Activated CD4-positive, alpha-beta T cell treated with anti-CD3 and anti-CD28 coated beads for 36 hours (primary cell): ENCODE measurements at regions of chr7 and their contacts with region 1.

Region 1: GRCh38 chr7:76011442-76011861 is 17.1 kb upstream of the TMEM120A start:
- DNase-seq: no peak
- ATAC-seq: no peak
- H3K4me3 Mint-ChIP-seq: no peak overlapping the region
- H3K27ac Mint-ChIP-seq: no peak overlapping the region
- H3K4me1 Mint-ChIP-seq: peaks cover 34% of the 10 kb centered on the region
- H3K27me3 Mint-ChIP-seq: peaks cover 3% of the 10 kb centered on the region

Region 2: GRCh38 chr7:75842836-75843446 is 168.5 kb before region 1 on chr7:
- CTCF ChIA-PET with region 1: no interaction called
- POLR2A ChIA-PET with region 1: no interaction called
- intact Hi-C with region 1: loop called in 1 of 2 experiments (anchors 1 kb)
- DNase-seq: peak; percentile 74
- ATAC-seq: peak; percentile 95
- H3K4me3 Mint-ChIP-seq: peak overlapping the region; percentile 32
- H3K27ac Mint-ChIP-seq: peak overlapping the region; percentile 87
- H3K4me1 Mint-ChIP-seq: peaks cover 14% of the 10 kb centered on the region
- H3K27me3 Mint-ChIP-seq: no peaks in the 10 kb centered on the region

Region 3: DNA sequence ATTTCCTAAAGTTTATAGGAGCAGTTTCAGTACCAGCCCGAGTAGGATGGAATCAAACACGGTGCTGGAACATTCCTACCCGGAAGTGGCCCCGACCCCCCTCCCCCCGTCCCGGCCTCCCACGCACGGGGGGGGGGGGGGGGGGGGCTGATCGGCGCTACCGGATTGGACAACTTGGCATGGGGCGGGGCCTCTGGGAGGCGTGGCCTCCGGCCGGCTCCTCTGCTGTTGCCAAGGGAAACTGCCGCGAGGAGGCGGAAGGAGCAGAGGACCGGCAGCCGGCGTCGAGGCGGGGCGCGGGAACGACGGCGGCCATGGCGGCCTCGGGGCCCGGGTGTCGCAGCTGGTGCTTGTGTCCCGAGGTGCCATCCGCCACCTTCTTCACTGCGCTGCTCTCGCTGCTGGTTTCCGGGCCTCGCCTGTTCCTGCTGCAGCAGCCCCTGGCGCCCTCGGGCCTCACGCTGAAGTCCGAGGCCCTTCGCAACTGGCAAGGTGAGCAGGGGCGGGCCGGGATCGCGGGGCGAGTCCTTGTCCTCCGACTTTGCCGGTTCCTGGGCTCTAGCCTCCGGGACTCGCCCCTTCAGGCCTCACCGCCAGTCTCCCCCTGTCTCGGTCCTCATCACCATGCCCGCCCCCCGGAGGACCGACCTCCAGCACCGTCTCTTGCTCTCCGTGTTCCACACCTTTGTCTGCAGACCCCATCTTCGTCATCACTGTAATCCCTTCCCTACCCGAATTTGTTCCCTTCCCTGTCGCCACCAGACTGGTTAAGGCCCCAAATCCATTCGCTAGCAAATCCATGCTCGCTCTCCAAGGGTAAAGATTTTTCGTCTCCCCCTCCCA is 132.5 kb before region 1 on chr7 and contains the start of gene RHBDD2:
- CTCF ChIA-PET with region 1: no interaction called
- POLR2A ChIA-PET with region 1: no interaction called
- intact Hi-C with region 1: loop called (anchors 1 to 5 kb)
- DNase-seq: peak; percentile 99
- ATAC-seq: peak; percentile 97
- H3K4me3 Mint-ChIP-seq: peak within 1 kb of the TSS; percentile 100
- H3K27ac Mint-ChIP-seq: peak within 1 kb of the TSS; percentile 97
- H3K4me1 Mint-ChIP-seq: peaks cover 34% of the 10 kb centered on the region
- H3K27me3 Mint-ChIP-seq: no peaks in the 10 kb centered on the region
- total RNA-seq, gene RHBDD2: 21.6 to 23.2 TPM

Region 4: DNA sequence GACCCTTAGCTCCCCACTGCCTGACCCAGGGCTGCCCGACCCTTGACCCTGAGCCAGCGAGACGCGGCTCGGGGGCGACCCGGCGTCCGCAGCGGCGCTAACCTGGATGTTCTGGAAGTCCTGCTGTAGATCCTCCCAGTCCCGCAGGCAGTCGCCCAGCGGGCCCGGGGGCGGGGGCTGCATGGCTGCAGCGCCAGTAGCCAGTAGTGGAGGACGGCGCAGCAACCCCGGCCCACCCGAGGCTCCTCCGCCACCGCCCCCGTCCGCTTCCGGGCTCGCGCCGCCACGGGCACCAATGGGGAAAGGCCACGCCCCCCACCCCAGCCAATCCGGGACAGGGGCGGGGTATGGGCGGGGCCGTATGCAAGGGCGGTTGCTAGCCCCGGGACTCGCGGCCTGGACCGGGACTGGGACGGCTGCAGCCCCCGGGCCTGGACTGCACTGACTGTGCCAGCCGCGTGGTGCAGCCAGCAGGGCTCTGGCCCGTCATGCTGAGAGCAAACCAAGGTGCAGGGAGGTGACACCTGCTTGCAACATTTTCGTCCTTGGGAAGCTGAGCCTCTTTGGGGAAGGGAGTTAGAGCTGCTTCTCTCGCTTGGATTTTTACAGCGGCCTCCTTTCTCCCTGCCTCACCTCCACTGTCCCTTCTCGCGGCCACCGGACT is 16.9 kb before region 1 on chr7 and contains the start of gene TMEM120A:
- CTCF ChIA-PET with region 1: interaction called, 4 read pairs
- POLR2A ChIA-PET with region 1: interaction called, 3 read pairs
- intact Hi-C with region 1: loop called (anchors 1 kb)
- DNase-seq: peak; percentile 97
- ATAC-seq: peak; percentile 99
- H3K4me3 Mint-ChIP-seq: peak within 1 kb of the TSS; percentile 66
- H3K27ac Mint-ChIP-seq: no peak within 1 kb of the TSS
- H3K4me1 Mint-ChIP-seq: peaks cover 29% of the 10 kb centered on the region
- H3K27me3 Mint-ChIP-seq: no peaks in the 10 kb centered on the region
- total RNA-seq, gene TMEM120A: 14.5 to 15.3 TPM